Right lobe of liver (tissue), 6 donors: ENCODE measurements at regions of chr12 and their contacts with region 1.

Region 1: DNA sequence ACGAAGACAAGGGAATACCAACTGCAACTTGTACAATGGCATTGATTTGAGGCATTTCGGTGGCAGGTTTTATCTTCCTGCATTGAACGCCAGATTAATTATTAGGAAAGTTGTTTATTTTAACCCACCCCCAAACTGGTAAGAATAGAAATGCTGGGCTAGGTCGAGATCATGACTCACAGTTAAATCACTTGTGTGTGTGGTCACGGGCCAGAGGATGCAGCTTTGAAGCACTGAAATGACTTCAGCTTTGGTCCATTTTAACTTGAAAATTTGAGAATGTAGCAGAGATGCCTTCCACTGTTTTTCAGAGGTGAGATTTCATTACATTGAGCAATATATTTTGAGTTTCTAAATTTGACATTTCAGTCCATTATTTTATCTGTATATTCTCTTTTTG is 23.6 kb upstream of the KCNH3 start:
- DNase-seq: peak in 1 of 3 donors; percentile 34
- ATAC-seq: peak in 3 of 4 donors; percentile 19 to 90 (median 42)
- H3K4me3 ChIP-seq: no peak overlapping the region
- H3K27ac ChIP-seq: no peak overlapping the region
- H3K4me1 ChIP-seq: no peaks in the 10 kb centered on the region
- H3K27me3 ChIP-seq: no peaks in the 10 kb centered on the region
- CTCF ChIP-seq: no peak
- POLR2A ChIP-seq: no peak

Region 2: DNA sequence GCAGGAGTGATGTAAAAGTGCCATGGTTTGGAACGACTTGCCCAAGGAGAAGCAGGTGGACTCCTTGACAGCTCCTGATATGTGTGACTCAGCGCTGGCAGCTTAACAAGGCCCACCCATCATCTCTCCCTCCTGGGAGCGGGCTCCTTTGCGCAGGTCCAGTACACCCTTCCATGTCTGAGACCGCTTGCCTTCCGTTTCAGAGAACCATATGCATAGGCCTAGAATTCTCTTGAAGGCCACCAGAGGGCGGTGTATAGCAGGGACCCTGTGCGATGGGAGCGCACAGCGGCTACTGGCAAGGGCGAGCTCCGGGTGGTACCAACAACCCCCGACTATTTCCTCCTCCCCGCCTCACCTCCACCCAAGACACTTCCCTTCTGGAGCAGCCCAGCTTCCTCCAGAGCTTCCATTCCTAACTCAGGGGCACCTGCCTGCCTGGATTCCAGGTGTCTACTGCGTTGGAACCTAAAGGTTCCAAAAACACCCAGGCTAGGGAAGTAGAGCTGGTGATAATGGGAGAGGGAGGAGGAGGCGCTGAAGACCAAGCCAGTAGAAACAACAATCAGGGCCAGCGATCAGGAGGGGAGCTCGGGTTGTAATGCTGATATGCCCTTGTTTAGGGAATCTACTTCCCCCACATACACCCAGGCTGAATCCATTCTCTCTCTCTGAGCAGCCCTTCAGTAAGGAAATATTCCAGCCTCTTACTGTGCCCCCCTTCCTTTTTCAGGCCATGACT is 426.9 kb before region 1 on chr12:
- intact Hi-C with region 1: no loop called
- DNase-seq: peak; percentile 59 to 71 (median 70)
- ATAC-seq: peak; percentile 95 to 96 (median 95)
- H3K4me3 ChIP-seq: no peak overlapping the region
- H3K27ac ChIP-seq: no peak overlapping the region
- H3K4me1 ChIP-seq: peaks cover 0 to 20% (median 0%) of the 10 kb centered on the region in 4 donors
- H3K27me3 ChIP-seq: peaks cover 0 to 16% of the 10 kb centered on the region in 2 donors
- CTCF ChIP-seq: peak; percentile 73 to 91 (median 88)
- POLR2A ChIP-seq: no peak

Region 3: GRCh38 chr12:49314811-49315210 is 200.5 kb before region 1 on chr12:
- intact Hi-C with region 1: no loop called
- DNase-seq: no peak
- ATAC-seq: no peak
- H3K4me3 ChIP-seq: no peak overlapping the region
- H3K27ac ChIP-seq: no peak overlapping the region
- H3K4me1 ChIP-seq: no peaks in the 10 kb centered on the region
- H3K27me3 ChIP-seq: no peaks in the 10 kb centered on the region
- CTCF ChIP-seq: no peak
- POLR2A ChIP-seq: no peak

Region 4: GRCh38 chr12:49336645-49337584 is 178.4 kb before region 1 on chr12 and contains the start of gene C1QL4:
- intact Hi-C with region 1: loop called in 1 of 2 experiments (anchors 10 kb)
- DNase-seq: peak; percentile 75 to 81 (median 81)
- ATAC-seq: peak; percentile 92 to 98 (median 95)
- H3K4me3 ChIP-seq: peak within 1 kb of the TSS in 2 of 3 donors; percentile 26 to 38
- H3K27ac ChIP-seq: no peak within 1 kb of the TSS
- H3K4me1 ChIP-seq: peaks cover 0 to 7% (median 0%) of the 10 kb centered on the region in 4 donors
- H3K27me3 ChIP-seq: peaks cover 0 to 21% of the 10 kb centered on the region in 2 donors
- CTCF ChIP-seq: peak; percentile 60 to 99 (median 98)
- POLR2A ChIP-seq: no peak
- total RNA-seq, gene C1QL4: not detected

Region 5: GRCh38 chr12:49358483-49359141 is 156.7 kb before region 1 on chr12:
- intact Hi-C with region 1: loop called (anchors 10 kb)
- DNase-seq: no peak
- ATAC-seq: peak; percentile 84 to 95 (median 86)
- H3K4me3 ChIP-seq: no peak overlapping the region
- H3K27ac ChIP-seq: no peak overlapping the region
- H3K4me1 ChIP-seq: no peaks in the 10 kb centered on the region
- H3K27me3 ChIP-seq: no peaks in the 10 kb centered on the region
- CTCF ChIP-seq: peak; percentile 64 to 83 (median 69)
- POLR2A ChIP-seq: no peak

Region 6: DNA sequence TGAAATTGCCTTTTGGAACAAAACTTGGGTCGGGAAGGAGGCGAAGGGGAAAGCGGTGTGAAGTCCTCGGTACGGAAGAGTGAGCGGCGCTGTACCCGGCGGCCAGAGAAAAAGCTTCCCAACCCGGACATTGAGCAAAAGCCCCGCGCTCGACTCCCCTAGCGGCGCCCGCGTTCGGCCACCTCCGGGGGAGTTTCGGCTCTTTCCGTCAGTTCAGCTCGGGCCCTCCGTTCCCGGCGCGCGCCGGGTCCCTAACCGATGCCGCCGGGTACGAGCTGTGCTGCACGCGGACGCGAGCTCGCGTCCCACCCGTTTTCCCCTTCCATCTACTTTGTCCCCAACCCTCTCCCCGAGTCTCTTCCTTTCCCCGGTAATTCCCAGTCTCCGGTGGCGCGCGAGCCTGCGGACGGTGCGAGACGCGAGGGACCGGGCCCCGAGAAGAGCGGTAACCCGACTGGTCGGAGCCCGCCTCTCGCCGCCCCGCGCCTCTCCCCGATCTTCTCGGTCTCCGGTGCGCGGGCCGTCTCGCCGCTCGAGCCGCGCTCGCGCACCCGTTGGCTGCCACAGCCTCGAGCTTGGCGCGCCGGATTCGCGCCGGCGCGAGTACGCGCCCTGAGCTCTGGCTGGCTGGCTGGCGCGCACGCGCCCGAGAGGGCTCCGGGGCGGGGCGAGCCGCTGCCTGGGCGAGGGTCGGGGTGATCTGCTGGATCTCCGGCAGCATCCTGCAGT is 148.4 kb before region 1 on chr12:
- intact Hi-C with region 1: loop called in 1 of 2 experiments (anchors 10 kb)
- DNase-seq: peak; percentile 93 to 96 (median 94)
- ATAC-seq: peak; percentile 92 to 96 (median 93)
- H3K4me3 ChIP-seq: peak overlapping the region; percentile 59 to 93 (median 73)
- H3K27ac ChIP-seq: peak overlapping the region; percentile 78 to 85 (median 80)
- H3K4me1 ChIP-seq: peaks cover 0 to 8% (median 0%) of the 10 kb centered on the region in 4 donors
- H3K27me3 ChIP-seq: no peaks in the 10 kb centered on the region
- CTCF ChIP-seq: peak in 1 of 4 donors; percentile 4
- POLR2A ChIP-seq: peak; percentile 74

Region 7: GRCh38 chr12:49789992-49790391 is 274.7 kb after region 1 on chr12:
- intact Hi-C with region 1: no loop called
- DNase-seq: no peak
- ATAC-seq: no peak
- H3K4me3 ChIP-seq: no peak overlapping the region
- H3K27ac ChIP-seq: no peak overlapping the region
- H3K4me1 ChIP-seq: no peaks in the 10 kb centered on the region
- H3K27me3 ChIP-seq: no peaks in the 10 kb centered on the region
- CTCF ChIP-seq: no peak
- POLR2A ChIP-seq: no peak